SK-N-SH (cell line): ENCODE measurements at regions of chr1 and their contacts with region 1.

Region 1: GRCh38 chr1:18913065-18913835 is 10.9 kb upstream of the ALDH4A1 start:
- DNase-seq: peak; percentile 95
- H3K4me3 ChIP-seq: no peak overlapping the region; a peak in 1 of 4 replicates
- H3K27ac ChIP-seq: no peak overlapping the region
- H3K4me1 ChIP-seq: no peaks in the 10 kb centered on the region; a peak in 1 of 4 replicates
- H3K27me3 ChIP-seq: no peaks in the 10 kb centered on the region
- CTCF ChIP-seq: peak; percentile 98
- EP300 ChIP-seq: no peak
- RAD21 ChIP-seq: peak; percentile 88

Region 2: GRCh38 chr1:18413541-18414305 is 499.5 kb before region 1 on chr1:
- CTCF ChIA-PET with region 1: no interaction called
- POLR2A ChIA-PET with region 1: no interaction called
- DNase-seq: no peak
- H3K4me3 ChIP-seq: no peak overlapping the region
- H3K27ac ChIP-seq: no peak overlapping the region
- H3K4me1 ChIP-seq: no peaks in the 10 kb centered on the region; a peak in 1 of 4 replicates
- H3K27me3 ChIP-seq: no peaks in the 10 kb centered on the region
- CTCF ChIP-seq: no peak
- EP300 ChIP-seq: no peak
- RAD21 ChIP-seq: no peak

Region 3: DNA sequence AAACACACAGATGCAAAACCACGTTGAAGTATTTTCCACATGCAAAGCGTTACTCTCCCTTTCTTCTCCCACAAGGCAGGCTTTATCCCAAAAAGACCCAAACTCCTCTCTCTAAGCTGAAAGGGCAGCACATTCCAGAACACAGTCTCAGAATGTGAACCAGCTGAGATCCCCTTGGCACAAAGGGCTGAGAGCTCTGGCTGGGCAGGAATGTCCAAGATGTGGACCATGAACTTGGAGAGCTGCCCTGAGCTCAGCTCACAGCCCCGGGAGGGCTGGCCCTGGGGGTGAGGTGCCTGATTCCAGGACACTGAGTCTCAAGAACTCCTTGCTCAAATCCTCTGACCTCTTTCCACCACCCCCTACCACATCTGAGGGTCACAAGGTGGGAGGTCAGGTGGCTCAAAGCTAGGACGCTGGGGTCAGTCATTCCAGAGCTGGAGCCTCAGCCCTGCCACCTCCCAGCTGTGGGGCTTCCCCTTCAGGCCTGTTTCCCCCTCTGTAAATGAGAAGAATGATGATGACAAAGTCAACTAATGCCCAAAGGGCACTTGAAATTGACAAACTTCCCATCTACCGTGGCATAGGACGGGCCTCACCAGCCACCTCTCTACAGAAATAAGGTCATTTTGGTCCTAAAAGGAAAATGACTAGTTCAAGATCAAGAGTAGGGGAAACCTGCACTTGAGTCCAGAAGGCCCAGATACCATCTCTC is 22.4 kb before region 1 on chr1:
- CTCF ChIA-PET with region 1: interaction called, 134 read pairs
- POLR2A ChIA-PET with region 1: no interaction called
- DNase-seq: no peak
- H3K4me3 ChIP-seq: no peak overlapping the region
- H3K27ac ChIP-seq: no peak overlapping the region
- H3K4me1 ChIP-seq: peaks cover 4 to 11% of the 10 kb centered on the region in 2 experiments; a peak in 2 of 4 replicates
- H3K27me3 ChIP-seq: no peaks in the 10 kb centered on the region
- CTCF ChIP-seq: no peak
- EP300 ChIP-seq: no peak
- RAD21 ChIP-seq: no peak

Region 4: GRCh38 chr1:18941221-18942141 is 28.2 kb after region 1 on chr1:
- CTCF ChIA-PET with region 1: interaction called, 13 read pairs
- POLR2A ChIA-PET with region 1: no interaction called
- DNase-seq: no peak
- H3K4me3 ChIP-seq: no peak overlapping the region
- H3K27ac ChIP-seq: peak overlapping the region in 1 of 2 experiments; percentile 83; a peak in 2 of 4 replicates
- H3K4me1 ChIP-seq: peaks cover 20 to 60% of the 10 kb centered on the region in 2 experiments; a peak in 2 of 4 replicates
- H3K27me3 ChIP-seq: no peaks in the 10 kb centered on the region
- CTCF ChIP-seq: no peak
- EP300 ChIP-seq: no peak
- RAD21 ChIP-seq: no peak

Region 5: GRCh38 chr1:19040010-19040680 is 126.9 kb after region 1 on chr1:
- CTCF ChIA-PET with region 1: interaction called, 10 read pairs
- POLR2A ChIA-PET with region 1: no interaction called
- DNase-seq: no peak
- H3K4me3 ChIP-seq: no peak overlapping the region
- H3K27ac ChIP-seq: no peak overlapping the region
- H3K4me1 ChIP-seq: peaks cover 0 to 11% of the 10 kb centered on the region in 2 experiments; a peak in 1 of 4 replicates
- H3K27me3 ChIP-seq: no peaks in the 10 kb centered on the region
- CTCF ChIP-seq: no peak
- EP300 ChIP-seq: no peak
- RAD21 ChIP-seq: no peak

Region 6: GRCh38 chr1:19096036-19096833 is 183.0 kb after region 1 on chr1:
- CTCF ChIA-PET with region 1: interaction called, 149 read pairs
- POLR2A ChIA-PET with region 1: no interaction called
- DNase-seq: peak; percentile 37
- H3K4me3 ChIP-seq: no peak overlapping the region
- H3K27ac ChIP-seq: no peak overlapping the region
- H3K4me1 ChIP-seq: no peaks in the 10 kb centered on the region
- H3K27me3 ChIP-seq: no peaks in the 10 kb centered on the region
- CTCF ChIP-seq: peak; percentile 49
- EP300 ChIP-seq: no peak
- RAD21 ChIP-seq: peak; percentile 62